ENCODE measurements at regions of chr5 and their contacts with region 1.

Region 1: DNA sequence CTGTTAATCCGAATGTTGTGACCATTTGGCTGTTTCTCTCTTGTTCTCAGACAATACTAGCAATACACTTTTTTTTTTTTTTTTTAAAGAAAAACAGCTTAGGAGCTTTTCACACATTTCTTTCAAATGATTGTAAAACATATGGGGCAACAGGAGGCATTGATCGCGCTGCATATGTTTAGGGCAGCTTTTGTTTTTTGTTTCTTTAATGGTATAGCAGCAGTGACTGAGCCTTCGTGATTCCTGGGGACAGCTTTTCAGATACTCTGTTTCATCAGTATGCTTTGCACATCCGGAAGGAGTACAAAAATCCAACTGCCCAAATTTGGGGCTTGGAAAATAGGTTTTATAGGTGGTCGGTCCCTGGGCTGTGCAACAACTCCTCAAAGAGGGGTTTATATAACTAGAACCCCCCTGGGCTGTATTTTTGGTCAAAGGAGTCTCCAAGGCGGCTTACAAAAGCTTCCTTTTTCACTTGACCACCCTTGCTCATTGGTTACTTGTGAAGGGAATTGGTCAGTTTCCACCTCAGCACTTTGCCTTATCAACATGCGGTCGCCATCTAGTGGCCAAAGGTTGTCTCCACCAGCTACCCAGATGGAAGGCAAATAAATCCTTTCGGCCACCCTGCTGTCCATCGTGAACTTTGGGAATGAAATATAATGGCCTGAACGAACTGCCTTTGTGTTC is 91.8 kb downstream of the PDE6A start:
- DNase-seq: peak; percentile 56 to 78
- ATAC-seq: peak; percentile 45 to 60
- H3K4me3 ChIP-seq: no peak overlapping the region
- H3K27ac ChIP-seq: peak overlapping the region; percentile 44 to 92 (median 52)
- H3K4me1 ChIP-seq: peaks cover 17 to 22% of the 10 kb centered on the region in 2 donors
- H3K27me3 ChIP-seq: no peaks in the 10 kb centered on the region
- CTCF ChIP-seq: peak; percentile 85 to 93 (median 90)
- POLR2A ChIP-seq: no peak

Region 2: DNA sequence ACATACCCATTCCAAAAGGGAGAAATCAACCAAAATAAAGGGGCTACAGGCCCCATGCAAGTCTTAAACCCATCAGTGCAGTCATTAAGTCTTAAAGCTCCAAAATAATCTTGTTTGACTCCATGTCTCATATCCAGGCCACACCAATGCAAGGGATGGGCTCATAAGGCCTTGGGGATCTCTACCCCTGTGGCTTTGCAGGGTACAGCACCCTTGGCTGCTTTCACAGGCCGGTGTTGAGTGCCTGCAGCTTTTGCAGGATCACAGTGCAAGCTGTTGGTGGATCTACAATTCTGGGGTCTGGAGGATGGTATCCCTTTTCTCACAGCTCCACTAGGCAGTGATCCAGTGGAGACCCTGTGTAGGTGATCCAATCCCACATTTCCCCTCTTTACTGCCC is 1689.4 kb before region 1 on chr5:
- in situ Hi-C with region 1: no loop called
- intact Hi-C with region 1: no loop called
- DNase-seq: no peak
- ATAC-seq: no peak
- H3K4me3 ChIP-seq: no peak overlapping the region
- H3K27ac ChIP-seq: no peak overlapping the region
- H3K4me1 ChIP-seq: no peaks in the 10 kb centered on the region
- H3K27me3 ChIP-seq: no peaks in the 10 kb centered on the region
- CTCF ChIP-seq: no peak
- POLR2A ChIP-seq: no peak

Region 3: DNA sequence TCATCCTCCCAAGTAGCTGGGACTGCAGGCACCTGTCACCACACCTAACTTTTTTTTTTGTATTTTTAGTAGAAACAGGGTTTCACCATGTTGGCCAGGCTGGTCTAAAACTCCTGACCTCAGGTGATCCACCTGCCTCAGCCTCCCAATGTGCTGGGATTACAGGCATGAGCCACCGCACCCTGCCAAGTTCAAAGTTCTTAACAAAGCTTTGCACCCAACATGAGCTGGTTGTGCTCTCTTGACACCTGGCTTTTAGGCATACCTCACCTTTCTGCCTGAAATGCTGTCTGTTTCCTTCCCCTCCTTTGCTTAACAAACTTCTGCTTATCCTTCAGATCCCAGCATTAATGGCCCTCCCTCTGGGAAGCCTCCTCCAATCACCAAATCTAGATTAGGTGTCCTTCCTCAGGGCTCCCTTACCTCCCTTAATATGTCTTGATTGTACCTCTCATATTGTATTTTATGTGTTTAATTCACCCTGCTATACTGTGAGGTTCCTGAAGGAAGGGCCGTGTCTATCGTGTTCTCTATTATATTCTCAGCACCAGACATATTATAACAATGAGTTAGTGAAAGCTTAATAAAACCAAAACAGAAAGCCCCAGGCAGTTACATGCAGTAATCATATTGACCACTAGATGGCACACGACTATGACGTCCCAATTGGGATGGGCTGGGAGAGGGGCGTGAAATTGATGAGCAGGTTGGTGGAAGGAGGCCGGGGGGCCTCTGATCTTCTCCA is 185.5 kb before region 1 on chr5:
- in situ Hi-C with region 1: no loop called
- intact Hi-C with region 1: loop called (anchors 2 kb)
- DNase-seq: no peak
- ATAC-seq: peak; percentile 41 to 47
- H3K4me3 ChIP-seq: no peak overlapping the region
- H3K27ac ChIP-seq: peak overlapping the region; percentile 5 to 49 (median 27)
- H3K4me1 ChIP-seq: peaks cover 19 to 29% of the 10 kb centered on the region in 2 donors
- H3K27me3 ChIP-seq: no peaks in the 10 kb centered on the region
- CTCF ChIP-seq: peak; percentile 79 to 88 (median 86)
- POLR2A ChIP-seq: no peak

Region 4: DNA sequence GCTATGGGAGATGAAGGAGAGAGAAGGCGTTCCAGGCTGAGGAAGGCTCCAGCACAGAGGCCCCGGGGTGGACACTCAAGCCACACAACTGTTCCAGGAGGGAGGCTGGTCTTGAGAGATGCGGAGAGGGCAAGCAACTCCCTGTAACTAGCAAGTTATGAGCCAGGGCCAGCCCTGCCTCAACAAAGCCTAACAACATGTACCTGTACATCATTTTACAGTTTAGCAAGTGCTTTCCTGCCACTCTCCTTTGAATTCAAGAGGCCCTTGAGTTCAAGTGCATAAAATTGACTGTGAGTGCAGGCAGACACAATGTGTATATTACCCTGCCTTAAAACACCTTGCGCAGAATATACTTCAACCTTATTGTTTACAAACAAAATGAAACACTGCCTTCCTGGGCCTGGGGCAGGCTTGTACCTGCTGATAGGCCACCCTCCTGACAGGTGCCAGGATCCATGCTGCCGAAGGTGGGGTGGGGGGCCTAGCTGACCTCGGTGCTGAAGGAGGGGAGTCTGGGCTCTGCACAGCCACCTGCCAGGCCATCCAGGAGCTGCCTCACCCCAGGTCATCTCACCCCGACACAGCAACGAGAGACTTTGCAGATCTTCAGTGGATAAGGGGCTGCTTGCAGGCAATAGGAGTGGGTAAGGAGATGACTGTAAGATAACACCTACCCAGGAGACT is 42.7 kb before region 1 on chr5:
- in situ Hi-C with region 1: no loop called
- intact Hi-C with region 1: loop called (anchors 1 kb)
- DNase-seq: no peak
- ATAC-seq: no peak
- H3K4me3 ChIP-seq: no peak overlapping the region
- H3K27ac ChIP-seq: peak overlapping the region; percentile 79 to 98 (median 96)
- H3K4me1 ChIP-seq: peaks cover 79 to 80% of the 10 kb centered on the region in 2 donors
- H3K27me3 ChIP-seq: no peaks in the 10 kb centered on the region
- CTCF ChIP-seq: no peak
- POLR2A ChIP-seq: no peak

Region 5: GRCh38 chr5:149834246-149834855 is 18.4 kb before region 1 on chr5:
- in situ Hi-C with region 1: no loop called
- intact Hi-C with region 1: loop called (anchors 1 kb)
- DNase-seq: peak in 1 of 2 donors; percentile 63
- ATAC-seq: peak; percentile 40 to 73
- H3K4me3 ChIP-seq: no peak overlapping the region
- H3K27ac ChIP-seq: no peak overlapping the region
- H3K4me1 ChIP-seq: peaks cover 0 to 12% of the 10 kb centered on the region in 2 donors
- H3K27me3 ChIP-seq: no peaks in the 10 kb centered on the region
- CTCF ChIP-seq: peak; percentile 40 to 77 (median 61)
- POLR2A ChIP-seq: no peak

Region 6: DNA sequence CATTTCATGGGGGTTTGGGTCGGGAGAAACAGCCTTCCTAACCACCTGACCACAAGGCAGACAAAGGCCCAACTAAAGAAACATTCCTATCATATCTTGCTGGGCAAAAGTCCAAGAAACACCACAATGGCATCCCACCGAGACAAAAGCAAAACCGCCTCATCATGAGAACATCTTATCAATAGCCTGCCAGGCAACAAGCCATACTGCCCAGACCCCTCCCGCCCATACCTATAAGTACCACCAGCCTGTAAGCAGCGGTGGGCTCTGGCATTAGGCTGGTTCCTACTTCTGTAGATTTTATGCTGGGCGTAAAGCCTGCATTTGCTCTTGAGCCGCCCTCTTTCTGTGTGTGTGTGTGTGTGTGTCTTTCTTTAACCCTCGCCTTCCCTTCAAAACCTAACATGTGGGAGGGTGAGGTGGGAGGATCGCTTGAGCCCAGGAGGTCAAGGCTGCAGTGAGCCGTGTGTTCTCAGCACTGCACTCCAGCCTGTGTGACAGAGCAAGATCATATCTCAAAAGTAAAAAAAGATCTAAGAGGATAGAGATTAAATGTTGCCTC is 34.9 kb after region 1 on chr5:
- in situ Hi-C with region 1: no loop called
- intact Hi-C with region 1: no loop called
- DNase-seq: no peak
- ATAC-seq: no peak
- H3K4me3 ChIP-seq: no peak overlapping the region
- H3K27ac ChIP-seq: no peak overlapping the region
- H3K4me1 ChIP-seq: no peaks in the 10 kb centered on the region
- H3K27me3 ChIP-seq: no peaks in the 10 kb centered on the region
- CTCF ChIP-seq: no peak
- POLR2A ChIP-seq: no peak

Region 7: GRCh38 chr5:149960272-149961185 is 107.7 kb after region 1 on chr5 and contains the start of gene SLC26A2:
- in situ Hi-C with region 1: no loop called
- intact Hi-C with region 1: loop called (anchors 5 kb)
- DNase-seq: peak; percentile 98 to 99
- ATAC-seq: peak; percentile 97 to 99
- H3K4me3 ChIP-seq: peak within 1 kb of the TSS; percentile 83 to 97 (median 93)
- H3K27ac ChIP-seq: peak within 1 kb of the TSS; percentile 89 to 93 (median 90)
- H3K4me1 ChIP-seq: peaks cover 8 to 15% of the 10 kb centered on the region in 2 donors
- H3K27me3 ChIP-seq: no peaks in the 10 kb centered on the region
- CTCF ChIP-seq: peak in 1 of 5 experiments; percentile 14
- POLR2A ChIP-seq: peak; percentile 93 to 97
- total RNA-seq, gene SLC26A2: 3.0 to 9.9 (median 6.9) TPM

Region 8: GRCh38 chr5:150357326-150358260 is 504.8 kb after region 1 on chr5 and contains the start of gene TCOF1:
- in situ Hi-C with region 1: no loop called
- intact Hi-C with region 1: no loop called
- DNase-seq: peak; percentile 91 to 95
- ATAC-seq: peak; percentile 94
- H3K4me3 ChIP-seq: peak within 1 kb of the TSS; percentile 74 to 92 (median 78)
- H3K27ac ChIP-seq: peak within 1 kb of the TSS; percentile 77 to 85 (median 78)
- H3K4me1 ChIP-seq: peaks cover 12 to 14% of the 10 kb centered on the region in 2 donors
- H3K27me3 ChIP-seq: no peaks in the 10 kb centered on the region
- CTCF ChIP-seq: no peak
- POLR2A ChIP-seq: peak; percentile 60
- total RNA-seq, gene TCOF1: 22.1 to 31.7 (median 27.1) TPM

Measured in gastrocnemius medialis (tissue), 4 donors.